ENCODE measurements at regions of chr4 and their contacts with region 1.

Region 1: DNA sequence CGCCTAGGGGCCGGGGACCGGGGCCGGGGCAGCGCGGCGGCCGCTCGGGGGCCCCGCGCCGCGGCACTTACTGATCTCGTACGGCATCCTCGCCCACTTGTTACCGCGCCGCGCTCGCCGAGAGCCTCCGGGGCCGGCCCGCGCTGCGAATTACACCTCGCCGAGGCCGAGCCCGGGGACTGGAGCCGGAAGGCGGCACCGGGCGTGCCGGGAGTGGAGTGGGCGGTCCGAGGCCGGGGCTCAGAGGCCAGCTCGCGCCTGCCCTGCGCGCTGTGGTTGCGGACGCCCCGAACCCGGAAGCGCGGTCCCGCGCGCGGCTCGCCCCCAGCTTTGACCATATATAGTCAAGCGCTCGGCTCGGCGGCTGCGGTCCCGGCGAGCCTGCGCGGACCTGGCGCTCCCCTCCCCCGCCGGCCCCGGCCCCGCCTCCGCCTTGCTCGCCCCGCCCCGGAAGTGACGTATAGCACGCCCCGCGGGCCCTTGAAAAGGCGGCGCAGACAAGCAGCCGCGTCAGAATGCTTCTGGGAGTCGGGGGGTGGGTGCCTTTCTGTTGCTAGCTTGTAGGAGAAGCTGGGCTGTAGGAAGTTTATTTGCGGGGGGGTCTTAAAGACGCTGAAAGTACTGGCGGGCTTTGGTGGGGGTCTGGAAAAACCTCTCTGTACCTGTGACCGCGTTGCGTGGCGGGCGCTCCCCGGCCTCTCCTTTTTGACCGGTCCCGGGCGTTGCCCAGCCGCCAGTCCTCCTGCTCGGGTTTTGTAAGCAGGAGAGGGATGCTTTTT is at the start of gene WDR1:
- DNase-seq: peak; percentile 94
- ATAC-seq: peak; percentile 90
- H3K4me3 ChIP-seq: peak within 1 kb of the TSS; percentile 94
- H3K27ac ChIP-seq: peak within 1 kb of the TSS; percentile 100
- H3K4me1 ChIP-seq: peaks cover 24% of the 10 kb centered on the region
- H3K27me3 ChIP-seq: no peaks in the 10 kb centered on the region
- CTCF ChIP-seq: no peak
- POLR2A ChIP-seq: peak; percentile 99
- RAD21 ChIP-seq: no peak
- total RNA-seq, gene WDR1: 782 and 992 TPM in 2 replicates

Region 2: DNA sequence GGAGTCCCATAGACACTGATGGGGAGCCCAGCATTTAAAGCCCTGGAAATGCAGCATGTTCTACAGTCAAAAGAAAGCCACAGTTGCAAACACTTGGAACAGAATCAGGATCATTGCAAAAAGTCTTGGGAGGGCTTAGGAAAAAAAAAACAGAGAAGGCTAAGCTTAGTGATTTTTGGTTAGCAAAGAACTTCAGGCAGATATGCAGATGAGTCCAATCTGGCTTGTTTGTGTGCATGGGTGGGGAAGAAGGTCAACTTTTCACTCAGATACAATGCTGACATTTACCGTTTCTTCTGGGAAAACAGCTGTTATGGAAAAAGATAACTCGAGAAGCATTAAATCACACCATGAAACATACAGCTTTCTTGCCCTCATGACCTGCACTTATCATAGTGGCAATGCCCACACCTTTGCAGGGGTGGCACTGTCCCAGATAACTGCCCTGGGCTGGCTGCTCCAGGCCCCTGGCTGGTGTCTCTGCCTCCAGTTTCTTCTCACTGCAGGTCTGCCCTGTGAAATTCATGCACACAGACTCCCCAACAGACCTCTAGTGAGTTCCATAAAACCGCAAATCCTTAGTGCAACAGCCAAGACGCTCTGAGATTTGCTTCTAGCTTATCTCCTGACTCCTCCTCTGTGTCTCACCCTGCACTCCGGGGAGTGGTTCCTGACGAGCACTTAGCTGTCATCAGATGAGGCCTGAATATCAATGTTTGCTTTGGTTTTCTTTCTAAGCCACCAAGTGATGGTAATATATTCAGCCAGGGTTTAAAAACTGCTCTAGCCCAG is 236.2 kb before region 1 on chr4:
- CTCF ChIA-PET with region 1: no interaction called
- POLR2A ChIA-PET with region 1: no interaction called
- dilution Hi-C with region 1: no loop called
- in situ Hi-C with region 1: no loop called
- intact Hi-C with region 1: no loop called
- DNase-seq: no peak
- ATAC-seq: peak; percentile 35; the same call in 1 of the 2 replicates
- H3K4me3 ChIP-seq: no peak overlapping the region
- H3K27ac ChIP-seq: no peak overlapping the region
- H3K4me1 ChIP-seq: no peaks in the 10 kb centered on the region; the same call in 1 of the 2 replicates
- H3K27me3 ChIP-seq: no peaks in the 10 kb centered on the region
- CTCF ChIP-seq: no peak
- POLR2A ChIP-seq: no peak
- RAD21 ChIP-seq: no peak

Region 3: GRCh38 chr4:10074767-10075105 is 42.0 kb before region 1 on chr4:
- CTCF ChIA-PET with region 1: no interaction called
- POLR2A ChIA-PET with region 1: interaction called, 3 read pairs
- dilution Hi-C with region 1: no loop called
- in situ Hi-C with region 1: no loop called
- intact Hi-C with region 1: loop called (anchors 1 kb)
- DNase-seq: peak; percentile 70
- ATAC-seq: peak; percentile 65
- H3K4me3 ChIP-seq: no peak overlapping the region
- H3K27ac ChIP-seq: no peak overlapping the region
- H3K4me1 ChIP-seq: no peaks in the 10 kb centered on the region
- H3K27me3 ChIP-seq: no peaks in the 10 kb centered on the region
- CTCF ChIP-seq: peak; percentile 61
- POLR2A ChIP-seq: no peak; the same call in 1 of the 2 replicates
- RAD21 ChIP-seq: peak; percentile 43; the same call in 1 of the 2 replicates

Region 4: GRCh38 chr4:10096201-10096977 is 20.4 kb before region 1 on chr4:
- CTCF ChIA-PET with region 1: interaction called, 3 read pairs
- POLR2A ChIA-PET with region 1: interaction called, 5 read pairs
- dilution Hi-C with region 1: no loop called
- in situ Hi-C with region 1: no loop called
- intact Hi-C with region 1: loop called (anchors 2 kb)
- DNase-seq: peak; percentile 94
- ATAC-seq: peak; percentile 69
- H3K4me3 ChIP-seq: no peak overlapping the region
- H3K27ac ChIP-seq: peak overlapping the region; percentile 83
- H3K4me1 ChIP-seq: peaks cover 61% of the 10 kb centered on the region
- H3K27me3 ChIP-seq: no peaks in the 10 kb centered on the region
- CTCF ChIP-seq: no peak
- POLR2A ChIP-seq: no peak
- RAD21 ChIP-seq: no peak

Region 5: GRCh38 chr4:10106421-10107039 is 10.2 kb before region 1 on chr4:
- CTCF ChIA-PET with region 1: interaction called, 3 read pairs
- POLR2A ChIA-PET with region 1: interaction called, 23 read pairs
- dilution Hi-C with region 1: no loop called
- in situ Hi-C with region 1: no loop called
- intact Hi-C with region 1: no loop called
- DNase-seq: peak; percentile 97
- ATAC-seq: peak; percentile 82
- H3K4me3 ChIP-seq: peak overlapping the region; percentile 8; the same call in 1 of the 2 replicates
- H3K27ac ChIP-seq: peak overlapping the region; percentile 94
- H3K4me1 ChIP-seq: peaks cover 73% of the 10 kb centered on the region
- H3K27me3 ChIP-seq: no peaks in the 10 kb centered on the region
- CTCF ChIP-seq: no peak
- POLR2A ChIP-seq: no peak
- RAD21 ChIP-seq: no peak

Region 6: GRCh38 chr4:10186228-10187214 is 69.8 kb after region 1 on chr4:
- CTCF ChIA-PET with region 1: no interaction called
- POLR2A ChIA-PET with region 1: no interaction called
- dilution Hi-C with region 1: no loop called
- in situ Hi-C with region 1: no loop called
- intact Hi-C with region 1: no loop called
- DNase-seq: no peak
- ATAC-seq: no peak
- H3K4me3 ChIP-seq: no peak overlapping the region
- H3K27ac ChIP-seq: no peak overlapping the region
- H3K4me1 ChIP-seq: peaks cover 2% of the 10 kb centered on the region; the same call in 1 of the 2 replicates
- H3K27me3 ChIP-seq: no peaks in the 10 kb centered on the region
- CTCF ChIP-seq: no peak
- POLR2A ChIP-seq: no peak
- RAD21 ChIP-seq: no peak

Region 7: DNA sequence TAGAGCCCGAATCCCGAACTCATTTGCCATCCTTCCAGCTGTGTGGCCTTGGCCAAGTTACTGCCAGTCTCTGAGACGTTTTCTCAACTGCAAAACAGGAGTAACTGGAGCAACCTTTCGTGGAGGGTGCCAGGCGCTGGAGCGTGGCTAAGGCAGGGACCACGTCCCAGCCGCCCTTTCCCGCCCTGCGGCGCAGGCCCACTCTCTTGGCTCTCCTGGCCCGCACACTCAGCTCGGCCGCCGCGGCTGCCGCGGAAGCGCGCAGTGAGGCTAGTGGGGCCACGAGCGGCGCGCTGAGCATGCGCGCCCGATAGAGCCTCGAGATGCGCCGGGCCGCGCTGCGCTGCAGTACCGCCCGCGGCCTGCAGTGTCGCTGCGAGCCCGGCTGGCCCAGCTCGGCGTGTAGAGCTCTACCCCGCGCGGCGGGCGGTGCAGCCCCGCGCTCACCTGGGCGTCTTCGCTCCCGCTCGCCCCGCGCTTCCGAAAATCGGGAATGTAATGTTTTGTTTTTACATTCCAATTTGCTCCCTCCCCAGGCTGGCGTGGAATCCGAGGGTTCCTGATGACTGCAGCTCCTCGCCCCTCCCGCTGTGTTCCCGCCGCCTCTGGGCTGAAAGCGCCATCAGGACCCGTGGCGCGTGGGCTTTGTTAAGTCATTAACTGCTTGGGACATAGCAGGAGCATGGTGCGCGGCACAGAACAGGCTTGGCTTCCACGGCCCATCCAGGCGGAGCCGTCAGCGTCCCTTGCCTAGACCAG is 344.5 kb after region 1 on chr4:
- CTCF ChIA-PET with region 1: no interaction called
- POLR2A ChIA-PET with region 1: no interaction called
- dilution Hi-C with region 1: no loop called
- in situ Hi-C with region 1: no loop called
- intact Hi-C with region 1: loop called (anchors 2 kb)
- DNase-seq: peak; percentile 57
- ATAC-seq: peak; percentile 88
- H3K4me3 ChIP-seq: peak overlapping the region; percentile 36
- H3K27ac ChIP-seq: no peak overlapping the region
- H3K4me1 ChIP-seq: no peaks in the 10 kb centered on the region
- H3K27me3 ChIP-seq: peaks cover 13% of the 10 kb centered on the region
- CTCF ChIP-seq: peak; percentile 85
- POLR2A ChIP-seq: no peak
- RAD21 ChIP-seq: peak; percentile 60

Region 8: DNA sequence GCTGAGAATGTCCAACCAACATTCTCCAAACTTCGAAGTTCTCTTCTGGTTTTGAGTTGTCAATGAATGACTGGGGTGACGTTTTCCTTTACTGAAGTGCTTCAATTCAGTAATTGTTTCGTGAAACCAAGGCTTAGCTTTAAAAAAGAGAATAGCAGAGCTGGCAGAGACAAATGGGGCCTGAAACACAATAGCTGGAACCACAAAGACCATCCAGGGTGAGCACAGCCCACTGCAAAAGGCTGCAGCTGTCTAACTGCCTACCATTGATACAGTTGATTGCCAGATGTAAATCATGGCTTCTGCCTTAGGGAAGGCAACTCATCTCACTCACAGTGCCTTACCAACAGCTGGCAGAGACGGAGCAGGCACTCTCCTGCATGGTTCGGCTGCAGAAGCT is 419.1 kb after region 1 on chr4:
- CTCF ChIA-PET with region 1: no interaction called
- POLR2A ChIA-PET with region 1: interaction called, 23 read pairs
- dilution Hi-C with region 1: no loop called
- in situ Hi-C with region 1: no loop called
- intact Hi-C with region 1: no loop called
- DNase-seq: no peak
- ATAC-seq: no peak
- H3K4me3 ChIP-seq: no peak overlapping the region
- H3K27ac ChIP-seq: no peak overlapping the region
- H3K4me1 ChIP-seq: no peaks in the 10 kb centered on the region
- H3K27me3 ChIP-seq: peaks cover 5% of the 10 kb centered on the region; the same call in 1 of the 2 replicates
- CTCF ChIP-seq: no peak
- POLR2A ChIP-seq: no peak
- RAD21 ChIP-seq: no peak

Measured in IMR-90 (cell line).